CD8-positive, alpha-beta memory T cell (primary cell): ENCODE measurements at regions of chr9 and their contacts with region 1.

Region 1: DNA sequence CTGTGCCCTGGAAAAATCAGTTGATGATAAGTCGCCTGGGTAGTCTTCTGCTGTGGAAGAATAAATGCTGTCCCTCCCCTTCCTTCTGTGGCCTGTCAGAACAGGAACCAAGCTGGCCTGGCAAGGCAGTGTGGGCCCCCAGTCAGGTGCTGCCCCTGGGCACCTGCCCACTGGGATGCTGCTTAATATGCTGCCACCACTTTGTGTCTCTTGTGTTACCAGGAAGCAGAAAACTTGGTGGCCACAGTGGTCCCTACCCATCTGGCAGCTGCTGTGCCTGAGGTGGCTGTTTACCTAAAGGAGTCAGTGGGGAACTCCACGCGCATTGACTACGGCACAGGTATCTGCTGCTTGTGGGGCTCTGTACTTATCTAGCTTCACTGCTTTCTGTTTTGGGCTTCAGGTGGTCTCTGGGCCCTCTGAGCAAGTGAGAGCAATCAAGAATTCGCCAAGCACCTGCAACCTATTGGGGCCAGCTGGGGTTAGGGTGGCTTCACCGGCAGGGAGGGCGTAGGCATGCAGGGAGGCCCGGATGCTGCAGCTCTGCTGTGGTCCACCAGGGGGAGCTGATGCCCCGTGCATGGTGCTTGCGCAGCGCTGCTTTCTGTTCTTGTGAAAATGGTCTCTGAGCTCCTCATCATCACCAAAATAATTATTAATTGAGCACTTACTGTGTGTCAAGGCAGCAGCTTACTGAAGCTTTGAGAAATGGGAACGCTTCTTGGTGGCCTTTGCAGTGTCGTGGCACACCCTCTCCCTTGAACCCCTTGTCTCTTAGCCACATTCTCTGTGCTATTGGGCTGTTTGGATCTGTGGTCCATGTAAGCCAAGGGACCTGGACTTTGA is 20.3 kb downstream of the PTPA start:
- DNase-seq: peak; percentile 75 to 87 (median 77)
- H3K4me3 ChIP-seq: no peak overlapping the region
- H3K4me3 Mint-ChIP-seq: peak overlapping the region in 1 of 7 donors; percentile 13
- H3K27ac ChIP-seq: no peak overlapping the region
- H3K27ac Mint-ChIP-seq: peak overlapping the region in 5 of 8 donors; percentile 32 to 87 (median 63)
- H3K4me1 ChIP-seq: peaks cover 5% of the 10 kb centered on the region
- H3K4me1 Mint-ChIP-seq: peaks cover 5 to 6% (median 6%) of the 10 kb centered on the region in 3 donors
- H3K27me3 ChIP-seq: no peaks in the 10 kb centered on the region
- H3K27me3 Mint-ChIP-seq: no peaks in the 10 kb centered on the region

Region 2: DNA sequence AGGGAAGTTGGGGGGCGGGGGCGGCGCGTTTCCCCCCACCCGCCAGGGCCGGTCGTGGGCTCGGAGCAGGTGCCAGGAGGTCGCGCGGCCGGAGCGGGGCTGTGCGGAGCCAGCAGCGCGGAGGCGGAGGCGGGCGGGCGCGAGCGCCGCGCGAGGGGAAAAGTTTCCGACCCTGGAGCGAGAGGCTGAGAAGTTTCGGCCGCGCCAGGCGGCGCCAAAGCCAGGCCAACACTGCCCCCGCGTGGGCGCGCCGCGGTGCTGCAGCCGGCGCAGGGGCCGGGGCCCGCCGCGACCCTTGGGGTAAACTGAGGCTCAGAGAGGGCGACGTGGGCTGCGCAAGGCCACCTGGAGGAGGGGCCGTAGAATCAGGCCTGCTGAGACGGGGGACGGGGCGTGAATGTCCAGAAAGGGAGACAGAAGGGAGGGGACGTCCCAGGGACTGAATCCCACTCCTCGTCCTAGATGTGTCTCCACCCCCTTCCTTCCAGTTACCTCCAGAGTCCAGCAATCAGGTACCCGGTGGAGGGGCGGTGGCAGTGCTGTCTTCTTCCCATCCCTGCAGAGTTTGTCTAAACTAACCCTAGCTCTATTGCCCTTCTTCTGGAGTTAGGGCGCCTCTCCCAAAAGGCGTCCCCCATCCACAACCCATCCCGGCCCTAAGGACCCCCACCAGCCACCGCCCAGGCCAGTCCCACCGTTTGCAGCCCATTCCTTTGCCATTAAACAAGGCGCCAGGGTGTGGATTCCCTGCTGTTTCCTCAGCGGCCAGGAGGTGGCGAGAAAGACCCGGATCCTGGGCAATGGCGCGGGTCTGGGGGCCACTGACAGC is 479.2 kb after region 1 on chr9:
- CTCF ChIA-PET with region 1: interaction called, 14 read pairs
- POLR2A ChIA-PET with region 1: interaction called, 4 read pairs
- DNase-seq: peak; percentile 67 to 82 (median 69)
- H3K4me3 ChIP-seq: peak overlapping the region; percentile 77
- H3K4me3 Mint-ChIP-seq: peak overlapping the region; percentile 73 to 90 (median 84)
- H3K27ac ChIP-seq: peak overlapping the region; percentile 61
- H3K27ac Mint-ChIP-seq: peak overlapping the region; percentile 36 to 99 (median 82)
- H3K4me1 ChIP-seq: peaks cover 29% of the 10 kb centered on the region
- H3K4me1 Mint-ChIP-seq: peaks cover 26 to 51% (median 28%) of the 10 kb centered on the region in 3 donors
- H3K27me3 ChIP-seq: no peaks in the 10 kb centered on the region
- H3K27me3 Mint-ChIP-seq: peaks cover 0 to 9% of the 10 kb centered on the region in 2 donors

Region 3: GRCh38 chr9:129626079-129626624 is 494.6 kb after region 1 on chr9 and contains the start of gene NTMT1:
- CTCF ChIA-PET with region 1: interaction called, 54 read pairs
- POLR2A ChIA-PET with region 1: no interaction called
- DNase-seq: peak; percentile 82 to 93 (median 89)
- H3K4me3 ChIP-seq: peak within 1 kb of the TSS; percentile 100
- H3K4me3 Mint-ChIP-seq: peak within 1 kb of the TSS; percentile 82 to 93 (median 89)
- H3K27ac ChIP-seq: peak within 1 kb of the TSS; percentile 97
- H3K27ac Mint-ChIP-seq: peak within 1 kb of the TSS; percentile 86 to 99 (median 97)
- H3K4me1 ChIP-seq: peaks cover 54% of the 10 kb centered on the region
- H3K4me1 Mint-ChIP-seq: peaks cover 48 to 63% (median 62%) of the 10 kb centered on the region in 3 donors
- H3K27me3 ChIP-seq: peaks cover 8% of the 10 kb centered on the region
- H3K27me3 Mint-ChIP-seq: peaks cover 6 to 11% of the 10 kb centered on the region in 2 donors
- total RNA-seq, gene NTMT1: 65.5 to 68.9 TPM

Region 4: DNA sequence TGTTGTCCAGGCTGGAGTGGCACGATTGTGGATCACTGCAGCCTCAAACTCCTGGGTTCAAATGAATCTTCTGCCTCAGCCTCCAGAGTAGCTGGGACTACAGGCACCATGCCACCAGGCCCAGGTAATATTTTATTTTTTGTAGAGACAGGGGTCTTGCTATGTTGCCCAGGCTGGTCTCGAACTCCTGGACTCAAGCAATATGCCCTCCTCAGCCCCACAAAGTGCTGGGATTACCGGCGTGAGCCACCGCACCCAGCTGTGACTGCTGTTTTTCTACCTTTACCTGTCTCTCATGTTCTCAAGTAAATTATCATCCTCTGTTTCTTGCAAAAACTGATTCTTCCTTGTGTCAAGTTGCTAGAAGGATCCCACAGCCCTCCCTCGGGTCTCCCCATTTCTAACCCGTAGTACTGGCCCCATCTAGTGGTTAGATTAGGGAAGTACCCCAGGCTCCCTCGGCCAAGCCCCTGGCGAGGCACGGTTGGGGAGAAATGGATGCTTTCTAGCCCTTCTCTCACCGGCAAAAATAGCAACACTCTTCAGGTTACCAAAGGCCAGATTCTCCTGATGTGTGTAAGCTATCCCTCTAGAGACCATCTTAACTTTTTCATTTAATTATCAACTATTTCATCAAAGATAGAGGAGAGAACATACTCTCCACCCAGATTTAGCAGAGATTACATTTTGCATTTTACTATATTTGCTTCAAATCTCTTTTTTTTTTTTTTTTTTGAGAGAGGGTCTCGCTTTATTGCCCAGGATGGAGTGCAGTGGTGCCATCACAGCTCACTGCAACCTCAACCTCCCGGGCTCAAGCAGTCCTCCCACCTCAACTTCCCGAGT is 652.2 kb after region 1 on chr9:
- CTCF ChIA-PET with region 1: interaction called, 25 read pairs
- POLR2A ChIA-PET with region 1: no interaction called
- DNase-seq: peak; percentile 40 to 79 (median 63)
- H3K4me3 ChIP-seq: no peak overlapping the region
- H3K4me3 Mint-ChIP-seq: no peak overlapping the region
- H3K27ac ChIP-seq: no peak overlapping the region
- H3K27ac Mint-ChIP-seq: peak overlapping the region in 1 of 8 donors; percentile 1
- H3K4me1 ChIP-seq: no peaks in the 10 kb centered on the region
- H3K4me1 Mint-ChIP-seq: peaks cover 0 to 5% (median 3%) of the 10 kb centered on the region in 3 donors
- H3K27me3 ChIP-seq: no peaks in the 10 kb centered on the region
- H3K27me3 Mint-ChIP-seq: peaks cover 11 to 14% of the 10 kb centered on the region in 2 donors